ENCODE measurements at regions of chr10 and their contacts with region 1.

Region 1: DNA sequence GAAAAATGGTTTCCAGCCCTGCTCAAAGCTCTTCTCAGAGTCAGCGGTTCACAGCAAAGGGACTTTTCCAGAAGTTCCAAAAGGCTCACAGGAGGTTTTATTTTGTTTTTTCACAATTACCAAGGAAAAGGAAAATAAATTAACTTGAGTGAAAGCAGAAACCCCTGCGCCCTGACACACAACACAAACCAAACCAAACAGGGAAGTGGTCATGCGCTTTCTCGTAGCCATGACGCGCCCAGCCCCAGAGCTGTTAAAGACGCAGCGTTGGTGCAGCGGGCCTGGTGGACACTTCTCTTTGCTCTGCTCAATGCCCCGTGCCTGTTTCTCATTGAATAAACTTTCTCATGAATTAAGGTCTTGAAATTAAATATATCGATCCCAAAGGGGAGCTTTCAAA is 134.4 kb upstream of the LYZL2 start:
- DNase-seq: peak; percentile 54
- H3K4me3 ChIP-seq: no peak overlapping the region
- H3K27ac ChIP-seq: peak overlapping the region; percentile 65 to 88 (median 76)
- H3K4me1 ChIP-seq: peaks cover 0 to 8% (median 4%) of the 10 kb centered on the region in 4 donors
- H3K27me3 ChIP-seq: no peaks in the 10 kb centered on the region
- CTCF ChIP-seq: no peak
- EP300 ChIP-seq: peak; percentile 79
- POLR2A ChIP-seq: no peak

Region 2: DNA sequence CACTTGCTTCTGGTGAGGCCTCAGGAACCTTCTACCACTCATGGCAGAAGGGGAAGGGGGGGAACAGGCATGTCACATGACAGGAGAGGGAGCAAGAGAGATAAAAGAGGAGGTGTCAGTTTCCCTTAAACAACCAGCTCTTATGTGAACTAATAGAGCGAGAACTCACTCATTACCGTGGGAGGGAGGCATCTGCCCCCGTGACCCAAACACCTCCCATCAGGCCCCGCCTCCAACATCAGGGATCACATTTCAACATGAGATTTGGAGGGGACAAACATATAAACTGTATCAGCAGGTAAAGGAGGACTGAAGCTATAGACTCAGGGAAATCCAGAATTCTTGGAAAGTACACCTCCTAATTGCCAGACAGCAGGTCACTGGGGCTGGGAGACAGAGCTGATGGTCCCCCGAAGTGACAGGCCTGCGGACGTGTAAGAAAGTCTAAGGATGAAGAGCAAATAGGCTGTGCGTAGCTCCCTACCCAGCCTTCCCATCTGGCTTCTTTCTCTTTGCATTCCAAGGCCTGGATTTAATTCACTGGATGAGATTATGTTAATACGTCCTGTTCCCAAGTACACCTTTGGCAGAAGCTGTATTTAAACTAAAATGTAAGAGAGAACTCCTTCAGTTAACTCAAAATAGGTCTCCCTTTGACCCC is 52.4 kb after region 1 on chr10:
- in situ Hi-C with region 1: no loop called
- intact Hi-C with region 1: loop called (anchors 2 kb)
- DNase-seq: no peak
- H3K4me3 ChIP-seq: no peak overlapping the region
- H3K27ac ChIP-seq: peak overlapping the region; percentile 71 to 90 (median 76)
- H3K4me1 ChIP-seq: peaks cover 16 to 71% (median 23%) of the 10 kb centered on the region in 4 donors
- H3K27me3 ChIP-seq: no peaks in the 10 kb centered on the region
- CTCF ChIP-seq: no peak
- EP300 ChIP-seq: no peak
- POLR2A ChIP-seq: no peak